Heart left ventricle (tissue), 16 donors: ENCODE measurements at regions of chr4 and their contacts with region 1.

Region 1: GRCh38 chr4:69322055-69322454 is 41.8 kb downstream of the UGT2B28 start:
- DNase-seq: no peak
- ATAC-seq: no peak
- H3K4me3 ChIP-seq: no peak overlapping the region
- H3K27ac ChIP-seq: no peak overlapping the region
- H3K4me1 ChIP-seq: no peaks in the 10 kb centered on the region
- H3K27me3 ChIP-seq: no peaks in the 10 kb centered on the region
- CTCF ChIP-seq: no peak
- POLR2A ChIP-seq: no peak

Region 2: DNA sequence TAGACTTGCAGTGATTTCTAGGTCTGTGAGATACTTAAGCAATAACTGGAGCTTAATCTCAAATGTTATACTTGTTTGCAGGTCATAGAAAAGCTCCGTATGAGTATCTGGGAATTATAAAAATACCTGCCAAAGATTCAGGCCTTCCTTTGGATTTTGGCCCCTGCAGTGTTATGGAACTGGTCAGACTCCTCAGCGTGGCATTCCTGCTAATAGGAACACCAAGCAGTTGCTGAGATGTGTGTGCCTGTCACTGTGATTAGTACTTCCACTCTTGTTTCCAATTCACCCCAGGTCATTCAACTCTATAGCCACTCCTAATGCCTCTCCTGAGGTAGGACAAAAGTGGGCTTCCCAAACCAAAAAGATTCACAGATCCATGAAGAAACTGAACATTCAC is 233.6 kb before region 1 on chr4:
- intact Hi-C with region 1: no loop called
- DNase-seq: no peak
- ATAC-seq: no peak
- H3K4me3 ChIP-seq: no peak overlapping the region
- H3K27ac ChIP-seq: no peak overlapping the region
- H3K4me1 ChIP-seq: no peaks in the 10 kb centered on the region
- H3K27me3 ChIP-seq: no peaks in the 10 kb centered on the region
- CTCF ChIP-seq: no peak
- POLR2A ChIP-seq: no peak

Region 3: DNA sequence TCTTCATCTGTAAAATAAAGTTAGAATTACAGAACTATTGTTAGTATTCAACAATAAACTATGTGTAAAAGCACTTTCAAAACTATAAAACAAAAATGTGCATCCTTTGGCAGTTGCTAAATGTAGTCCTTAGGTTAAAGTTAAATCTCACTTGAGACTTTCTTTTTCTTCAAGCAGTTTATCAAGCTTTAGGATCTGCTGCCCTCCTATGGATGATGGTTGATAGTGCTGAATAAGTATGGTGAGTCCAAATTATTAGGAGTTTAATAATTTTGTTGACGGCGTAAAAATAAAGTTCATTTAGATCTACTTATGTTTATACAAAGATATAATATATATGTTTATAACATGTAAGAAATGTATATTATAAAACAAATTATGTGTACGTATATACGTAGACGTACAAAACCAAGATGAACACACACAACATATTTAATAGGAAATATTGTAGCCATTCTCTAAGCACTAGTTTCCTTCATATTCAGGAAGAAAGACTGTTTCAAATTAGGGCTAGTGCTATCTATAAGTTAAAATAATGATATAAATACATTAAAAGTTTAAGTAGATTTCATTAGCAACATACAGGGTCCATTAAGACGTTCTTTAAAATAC is 295.1 kb after region 1 on chr4:
- intact Hi-C with region 1: loop called in 8 of 10 experiments (anchors 2 to 10 kb)
- DNase-seq: no peak
- ATAC-seq: no peak
- H3K4me3 ChIP-seq: no peak overlapping the region
- H3K27ac ChIP-seq: no peak overlapping the region
- H3K4me1 ChIP-seq: no peaks in the 10 kb centered on the region
- H3K27me3 ChIP-seq: no peaks in the 10 kb centered on the region
- CTCF ChIP-seq: peak in 8 of 12 donors; percentile 4 to 49 (median 24)
- POLR2A ChIP-seq: no peak

Region 4: DNA sequence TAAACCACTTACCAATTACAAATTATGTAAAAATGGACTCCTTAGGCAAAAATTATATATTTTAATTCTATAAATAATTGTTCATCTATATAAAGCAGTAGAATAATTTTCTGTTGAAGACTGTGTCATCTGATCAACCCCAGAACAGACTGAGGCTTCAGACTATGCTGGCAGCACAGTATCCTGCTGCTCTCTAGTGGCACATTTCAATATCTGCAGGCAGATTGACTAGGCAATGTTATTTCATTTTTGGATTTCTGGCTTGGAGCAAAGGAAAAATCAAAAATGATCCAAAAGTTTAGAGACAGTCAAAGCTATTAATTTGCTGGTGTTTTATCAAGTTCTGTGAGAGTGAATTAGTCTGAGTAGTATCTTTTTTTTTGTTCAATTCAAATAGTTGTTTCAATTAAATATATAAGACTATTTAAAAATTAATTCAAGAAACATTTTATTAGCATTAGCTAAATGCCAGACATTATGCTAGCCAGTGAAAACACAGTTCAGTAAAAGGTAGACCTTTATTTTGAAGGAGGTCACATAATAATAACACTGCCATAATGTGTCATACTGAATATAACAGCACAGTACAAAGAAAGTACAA is 559.2 kb after region 1 on chr4:
- intact Hi-C with region 1: loop called in 1 of 10 experiments (anchors 10 kb)
- DNase-seq: no peak
- ATAC-seq: peak; percentile 46 to 68 (median 59)
- H3K4me3 ChIP-seq: no peak overlapping the region
- H3K27ac ChIP-seq: no peak overlapping the region
- H3K4me1 ChIP-seq: no peaks in the 10 kb centered on the region
- H3K27me3 ChIP-seq: no peaks in the 10 kb centered on the region
- CTCF ChIP-seq: peak; percentile 25 to 70 (median 48)
- POLR2A ChIP-seq: no peak